Endothelial cell of umbilical vein (primary cell): ENCODE measurements at regions of chr4 and their contacts with region 1.

Region 1: DNA sequence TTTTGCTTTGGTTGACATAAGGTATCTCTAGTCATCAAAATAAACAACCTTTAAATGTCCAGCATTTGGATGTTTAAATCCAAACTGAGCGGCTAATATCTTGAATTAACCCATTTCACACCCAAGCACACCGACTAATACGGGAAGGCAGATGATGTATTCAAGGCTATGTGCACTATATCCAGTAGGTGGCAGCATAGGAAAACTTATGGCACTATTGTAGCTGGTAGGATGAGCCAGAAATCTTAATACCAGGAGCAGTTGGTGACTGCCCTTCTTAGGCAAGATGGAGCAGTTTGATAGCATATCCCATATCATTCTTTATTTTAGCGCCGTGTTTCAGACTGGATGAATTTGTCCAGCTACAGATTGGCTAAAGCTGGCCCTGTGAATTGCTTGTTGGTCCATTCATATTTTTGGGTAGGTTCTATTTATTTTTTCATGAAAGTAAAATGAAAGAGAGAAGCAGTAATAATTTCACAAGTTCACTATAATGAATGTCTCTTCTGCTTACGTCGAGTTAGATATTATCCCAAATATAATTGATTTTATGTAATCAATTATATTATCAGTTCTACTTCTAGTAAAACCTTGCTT is 24.4 kb downstream of the UCHL1 start:
- DNase-seq: peak; percentile 87
- H3K4me3 ChIP-seq: no peak overlapping the region
- H3K27ac ChIP-seq: no peak overlapping the region
- H3K4me1 ChIP-seq: no peaks in the 10 kb centered on the region
- H3K27me3 ChIP-seq: peaks cover 0 to 1% of the 10 kb centered on the region in 2 experiments
- CTCF ChIP-seq: peak; percentile 53 to 77
- POLR2A ChIP-seq: no peak

Region 2: DNA sequence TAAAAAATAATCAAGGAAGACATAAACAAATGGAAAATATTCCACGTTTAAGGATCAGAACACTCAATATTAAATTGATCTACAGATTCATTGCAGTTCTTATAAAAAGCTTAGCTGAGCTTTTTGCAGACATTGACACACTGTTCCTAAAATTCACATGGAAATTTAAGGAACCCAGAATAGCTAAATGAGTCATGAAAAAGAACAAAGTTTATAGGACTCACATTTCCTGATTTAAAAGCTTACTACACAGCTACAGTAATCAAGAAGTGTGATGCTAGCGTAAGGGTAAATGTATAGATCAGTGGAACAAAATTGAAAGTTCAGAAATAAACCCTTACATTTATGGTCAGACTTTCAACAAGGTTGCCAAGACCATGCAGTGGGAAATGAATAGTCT is 498.3 kb before region 1 on chr4:
- CTCF ChIA-PET with region 1: no interaction called
- POLR2A ChIA-PET with region 1: no interaction called
- dilution Hi-C with region 1: no loop called
- intact Hi-C with region 1: no loop called
- DNase-seq: no peak
- H3K4me3 ChIP-seq: no peak overlapping the region
- H3K27ac ChIP-seq: no peak overlapping the region
- H3K4me1 ChIP-seq: no peaks in the 10 kb centered on the region
- H3K27me3 ChIP-seq: peaks cover 2 to 8% of the 10 kb centered on the region in 2 experiments
- CTCF ChIP-seq: no peak
- POLR2A ChIP-seq: no peak

Region 3: DNA sequence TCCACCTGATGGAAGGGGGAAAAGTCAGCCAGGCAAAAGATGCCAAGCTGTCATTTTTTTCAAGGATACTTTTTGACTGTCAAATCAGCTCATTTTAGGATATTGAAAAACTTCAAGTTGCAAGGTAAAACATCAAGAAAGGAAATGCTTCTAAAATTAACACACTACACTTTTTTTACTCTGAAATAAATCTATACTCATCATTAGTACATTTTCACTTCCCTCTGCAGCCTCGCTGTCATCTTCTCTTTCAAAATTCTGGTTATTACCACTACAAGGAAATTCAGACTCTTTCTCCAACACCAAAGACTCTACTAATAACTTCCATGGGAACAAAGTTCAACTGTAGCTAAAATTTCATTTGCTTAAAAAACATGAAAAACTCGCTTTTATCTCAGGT is 108.3 kb before region 1 on chr4:
- CTCF ChIA-PET with region 1: no interaction called
- POLR2A ChIA-PET with region 1: no interaction called
- dilution Hi-C with region 1: no loop called
- intact Hi-C with region 1: no loop called
- DNase-seq: no peak
- H3K4me3 ChIP-seq: no peak overlapping the region
- H3K27ac ChIP-seq: no peak overlapping the region
- H3K4me1 ChIP-seq: peaks cover 26% of the 10 kb centered on the region
- H3K27me3 ChIP-seq: no peaks in the 10 kb centered on the region
- CTCF ChIP-seq: no peak
- POLR2A ChIP-seq: no peak

Region 4: DNA sequence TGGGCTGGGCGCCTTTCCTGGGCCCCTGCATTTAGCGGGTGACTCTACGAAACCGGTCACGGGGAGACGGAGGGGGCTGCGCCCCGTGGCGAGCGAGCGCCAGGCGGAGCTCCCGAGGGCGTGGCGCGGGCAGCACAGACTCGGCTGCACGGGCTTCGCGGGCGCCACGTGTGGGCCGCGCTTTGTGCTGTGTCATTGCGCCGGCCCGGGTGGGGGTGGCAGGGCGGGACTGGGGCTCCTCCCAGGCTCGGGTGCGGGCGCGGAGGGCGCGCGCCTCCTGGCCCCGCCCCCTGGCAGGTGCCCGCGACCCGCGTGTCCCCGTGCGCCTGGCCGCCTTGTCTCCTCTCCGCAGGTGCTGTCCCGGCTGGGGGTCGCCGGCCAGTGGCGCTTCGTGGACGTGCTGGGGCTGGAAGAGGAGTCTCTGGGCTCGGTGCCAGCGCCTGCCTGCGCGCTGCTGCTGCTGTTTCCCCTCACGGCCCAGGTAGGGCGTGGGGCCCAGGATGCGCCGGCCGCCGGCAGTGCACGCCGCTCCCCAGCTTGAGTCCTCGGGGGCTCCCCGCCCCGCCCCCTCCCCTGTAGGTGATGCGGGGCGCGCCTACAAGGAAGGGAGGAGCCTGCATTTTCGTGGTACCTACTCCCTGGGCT is 23.8 kb before region 1 on chr4:
- CTCF ChIA-PET with region 1: interaction called, 21 read pairs
- POLR2A ChIA-PET with region 1: no interaction called
- dilution Hi-C with region 1: no loop called
- intact Hi-C with region 1: no loop called
- DNase-seq: peak; percentile 36
- H3K4me3 ChIP-seq: peak overlapping the region; percentile 35 to 54 (median 48)
- H3K27ac ChIP-seq: peak overlapping the region; percentile 0
- H3K4me1 ChIP-seq: peaks cover 12% of the 10 kb centered on the region
- H3K27me3 ChIP-seq: peaks cover 14 to 15% of the 10 kb centered on the region in 2 experiments
- CTCF ChIP-seq: no peak
- POLR2A ChIP-seq: no peak

Region 5: DNA sequence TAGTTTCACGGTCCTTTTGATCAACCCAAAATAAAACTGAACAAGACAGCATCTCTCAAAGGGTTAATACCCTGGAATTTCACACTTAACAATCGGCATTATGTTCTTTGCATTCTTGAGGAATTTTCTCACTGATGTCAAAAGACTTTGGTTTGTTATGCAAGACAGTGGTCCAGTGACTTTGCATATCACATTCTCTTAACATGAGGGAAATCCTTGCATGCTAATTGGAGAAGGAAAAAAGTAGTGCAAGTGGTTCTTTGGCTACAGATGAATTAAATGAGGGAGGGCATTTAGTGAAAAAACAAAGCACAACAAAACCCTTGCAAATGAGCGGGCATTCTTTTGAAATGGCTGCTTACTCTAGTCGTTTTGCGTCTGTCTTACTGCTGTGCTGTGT is 151.7 kb after region 1 on chr4:
- CTCF ChIA-PET with region 1: no interaction called
- POLR2A ChIA-PET with region 1: no interaction called
- dilution Hi-C with region 1: no loop called
- intact Hi-C with region 1: loop called (anchors 5 kb)
- DNase-seq: peak; percentile 42
- H3K4me3 ChIP-seq: no peak overlapping the region
- H3K27ac ChIP-seq: no peak overlapping the region
- H3K4me1 ChIP-seq: peaks cover 11% of the 10 kb centered on the region
- H3K27me3 ChIP-seq: peaks cover 18 to 49% of the 10 kb centered on the region in 2 experiments
- CTCF ChIP-seq: no peak
- POLR2A ChIP-seq: no peak

Region 6: DNA sequence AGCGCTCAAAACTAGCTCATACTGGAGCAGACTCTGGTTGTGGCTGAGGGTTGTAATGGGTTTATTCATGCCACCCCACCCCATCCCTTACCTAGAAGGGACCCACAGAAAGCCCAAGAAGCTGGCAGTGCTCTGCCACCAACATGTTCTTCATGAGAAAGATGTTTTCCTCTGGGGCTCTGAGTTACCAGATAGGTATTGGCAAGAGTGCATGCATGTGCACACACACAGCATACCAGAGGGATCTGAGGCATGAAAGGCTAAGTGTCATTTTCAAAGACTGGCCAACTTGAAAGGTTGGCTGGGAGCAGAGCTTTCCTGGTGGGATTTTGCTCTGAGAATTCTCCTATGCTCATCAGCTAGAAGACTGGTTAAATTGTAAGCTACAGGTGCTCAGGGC is 402.2 kb after region 1 on chr4:
- CTCF ChIA-PET with region 1: interaction called, 11 read pairs
- POLR2A ChIA-PET with region 1: no interaction called
- dilution Hi-C with region 1: no loop called
- intact Hi-C with region 1: no loop called
- DNase-seq: no peak
- H3K4me3 ChIP-seq: no peak overlapping the region
- H3K27ac ChIP-seq: no peak overlapping the region
- H3K4me1 ChIP-seq: no peaks in the 10 kb centered on the region
- H3K27me3 ChIP-seq: peaks cover 8 to 13% of the 10 kb centered on the region in 2 experiments
- CTCF ChIP-seq: no peak
- POLR2A ChIP-seq: no peak

Region 7: GRCh38 chr4:41887821-41888686 is 606.9 kb after region 1 on chr4:
- CTCF ChIA-PET with region 1: interaction called, 25 read pairs
- POLR2A ChIA-PET with region 1: no interaction called
- dilution Hi-C with region 1: no loop called
- intact Hi-C with region 1: loop called (anchors 1 kb)
- DNase-seq: peak; percentile 55
- H3K4me3 ChIP-seq: no peak overlapping the region
- H3K27ac ChIP-seq: no peak overlapping the region
- H3K4me1 ChIP-seq: no peaks in the 10 kb centered on the region
- H3K27me3 ChIP-seq: peaks cover 32 to 69% of the 10 kb centered on the region in 2 experiments
- CTCF ChIP-seq: peak; percentile 58
- POLR2A ChIP-seq: no peak